ENCODE measurements at regions of chr7 and their contacts with region 1.

Region 1: DNA sequence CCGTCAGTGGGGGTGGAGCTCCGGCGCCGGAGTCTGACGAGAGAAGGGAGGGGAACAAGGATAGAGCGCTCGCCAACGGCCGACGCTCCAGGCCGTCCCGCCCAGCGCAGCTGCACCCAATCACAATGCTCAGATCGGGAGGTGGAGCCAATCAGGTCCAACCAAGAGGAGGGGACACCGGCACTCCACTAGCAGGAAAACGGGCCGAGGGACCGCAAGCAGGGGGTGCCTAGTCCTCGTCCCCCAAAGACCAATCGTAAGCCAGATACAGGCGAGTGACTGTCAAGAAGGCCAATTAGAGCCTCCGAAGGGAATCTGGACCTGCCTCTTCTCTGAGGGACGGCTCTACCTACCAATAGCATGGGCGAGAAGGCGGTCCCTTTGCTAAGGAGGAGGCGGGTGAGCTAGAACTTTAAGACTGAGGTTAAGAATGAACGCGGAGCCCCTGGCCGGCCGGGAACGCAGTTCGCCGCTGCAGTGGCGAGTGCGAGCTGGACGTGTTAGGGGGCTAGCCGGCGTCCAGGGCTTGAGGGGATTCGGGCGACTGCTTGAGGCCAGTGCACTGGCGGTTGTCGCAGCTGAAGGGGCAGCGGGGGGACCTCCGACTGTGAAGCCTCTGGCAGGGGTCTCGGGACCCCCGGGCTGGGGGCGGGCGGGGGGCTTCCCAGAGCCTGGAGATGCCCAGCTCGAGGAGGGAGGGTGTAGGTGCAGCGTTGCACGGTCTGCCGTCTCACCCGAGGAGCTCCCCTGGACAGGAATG is at the start of gene FBXO24:
- DNase-seq: peak; percentile 100
- H3K4me3 Mint-ChIP-seq: peak within 1 kb of the TSS; percentile 91
- H3K27ac Mint-ChIP-seq: peak within 1 kb of the TSS; percentile 96
- H3K4me1 Mint-ChIP-seq: peaks cover 30% of the 10 kb centered on the region
- H3K27me3 Mint-ChIP-seq: peaks cover 6% of the 10 kb centered on the region
- total RNA-seq, gene FBXO24: 0.38 and 0.42 TPM in 2 replicates

Region 2: GRCh38 chr7:100126931-100127865 is 459.2 kb before region 1 on chr7 and contains the start of gene MBLAC1:
- intact Hi-C with region 1: loop called (anchors 10 kb)
- DNase-seq: peak; percentile 97
- H3K4me3 Mint-ChIP-seq: peak within 1 kb of the TSS; percentile 99
- H3K27ac Mint-ChIP-seq: peak within 1 kb of the TSS; percentile 100
- H3K4me1 Mint-ChIP-seq: peaks cover 22% of the 10 kb centered on the region
- H3K27me3 Mint-ChIP-seq: no peaks in the 10 kb centered on the region
- total RNA-seq, gene MBLAC1: 3.0 and 3.5 TPM in 2 replicates

Region 3: GRCh38 chr7:100538654-100539435 is 47.6 kb before region 1 on chr7 and contains the start of gene AGFG2:
- intact Hi-C with region 1: loop called (anchors 1 kb)
- DNase-seq: peak; percentile 100
- H3K4me3 Mint-ChIP-seq: peak within 1 kb of the TSS; percentile 99
- H3K27ac Mint-ChIP-seq: peak within 1 kb of the TSS; percentile 99
- H3K4me1 Mint-ChIP-seq: peaks cover 46% of the 10 kb centered on the region
- H3K27me3 Mint-ChIP-seq: no peaks in the 10 kb centered on the region
- total RNA-seq, gene AGFG2: 112 and 114 TPM in 2 replicates

Region 4: GRCh38 chr7:100604976-100605911 is 18.8 kb after region 1 on chr7:
- intact Hi-C with region 1: loop called (anchors 1 kb)
- DNase-seq: peak; percentile 88
- H3K4me3 Mint-ChIP-seq: peak overlapping the region; percentile 88
- H3K27ac Mint-ChIP-seq: peak overlapping the region; percentile 22
- H3K4me1 Mint-ChIP-seq: peaks cover 23% of the 10 kb centered on the region
- H3K27me3 Mint-ChIP-seq: peaks cover 13% of the 10 kb centered on the region

Region 5: DNA sequence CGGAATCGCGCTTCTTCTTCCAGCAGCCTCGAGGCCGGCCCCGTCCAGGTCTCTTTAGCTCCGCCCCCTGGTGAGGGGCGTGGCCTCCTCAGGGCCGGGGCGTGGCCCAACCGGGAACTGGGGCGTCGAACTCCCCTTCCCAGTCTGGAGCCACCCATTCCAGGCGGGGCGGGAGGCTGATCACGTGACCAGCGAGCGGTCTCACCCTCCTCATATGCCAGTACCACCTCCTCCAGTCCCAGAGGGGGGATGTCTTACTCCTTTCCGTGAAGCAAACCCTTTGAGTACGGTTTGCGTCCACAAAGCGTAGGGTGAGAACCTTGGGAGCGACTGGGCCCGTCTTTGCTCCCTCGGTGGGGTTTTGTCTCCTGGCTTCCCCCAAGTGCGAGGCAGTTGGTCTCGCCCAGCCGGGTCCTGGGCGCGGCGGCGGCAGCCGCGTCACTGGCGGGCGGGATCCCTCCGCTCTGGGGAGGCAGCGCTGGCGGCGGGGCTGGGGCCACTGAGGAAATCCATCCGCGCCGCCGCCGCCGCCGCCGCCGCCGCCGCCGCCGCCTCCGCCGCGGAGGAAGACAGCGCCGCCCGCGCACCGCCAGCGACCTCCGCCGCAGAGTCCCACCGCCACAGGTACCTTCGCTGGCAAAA is 87.0 kb after region 1 on chr7 and contains the start of gene GNB2:
- intact Hi-C with region 1: loop called (anchors 1 kb)
- DNase-seq: peak; percentile 100
- H3K4me3 Mint-ChIP-seq: peak within 1 kb of the TSS; percentile 96
- H3K27ac Mint-ChIP-seq: peak within 1 kb of the TSS; percentile 94
- H3K4me1 Mint-ChIP-seq: peaks cover 12% of the 10 kb centered on the region
- H3K27me3 Mint-ChIP-seq: peaks cover 14% of the 10 kb centered on the region
- total RNA-seq, gene GNB2: 205 and 211 TPM in 2 replicates

Region 6: DNA sequence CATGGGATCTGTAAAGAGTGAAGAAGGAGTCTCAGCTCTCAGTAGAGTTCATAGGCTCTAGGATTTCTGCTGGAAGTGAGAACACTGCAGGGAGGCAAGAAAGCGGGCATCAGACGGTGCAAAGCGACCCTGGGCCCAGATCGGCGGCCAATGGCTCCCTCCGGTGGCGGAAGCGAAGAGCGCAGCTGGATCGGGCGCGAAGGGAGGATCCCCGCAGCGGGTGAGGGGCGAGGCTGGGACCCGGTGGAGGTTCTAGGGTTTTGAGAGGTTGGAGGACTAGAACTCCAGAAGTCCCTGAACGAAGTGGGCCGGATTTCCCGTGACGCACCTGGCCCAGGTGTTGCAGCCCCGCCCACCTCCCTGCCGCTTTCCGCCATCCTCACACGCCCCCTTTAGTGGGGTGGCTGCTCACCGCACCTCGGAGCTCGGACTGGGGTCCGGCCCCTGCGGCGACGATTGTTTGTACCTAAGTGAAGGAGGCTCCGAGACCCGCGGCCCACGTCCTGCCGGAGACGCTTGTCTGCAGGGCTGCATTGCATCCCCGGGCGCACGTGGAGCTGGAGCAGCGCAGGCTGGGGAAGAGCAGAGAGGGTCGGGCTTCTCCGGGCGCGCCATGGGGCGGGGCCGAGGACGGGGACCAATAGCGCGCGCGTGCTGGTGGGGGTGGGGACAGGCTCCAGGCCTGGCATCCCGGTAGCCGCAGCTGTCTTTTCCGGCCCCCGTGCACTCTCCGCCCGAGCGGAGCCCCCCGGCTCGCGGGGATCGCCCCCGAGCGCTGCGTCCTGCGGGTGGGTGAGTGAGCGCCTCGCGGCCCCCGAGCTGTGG is 265.8 kb after region 1 on chr7 and contains the start of gene SLC12A9:
- intact Hi-C with region 1: loop called (anchors 5 kb)
- DNase-seq: peak; percentile 97
- H3K4me3 Mint-ChIP-seq: peak within 1 kb of the TSS; percentile 95
- H3K27ac Mint-ChIP-seq: peak within 1 kb of the TSS; percentile 82
- H3K4me1 Mint-ChIP-seq: peaks cover 12% of the 10 kb centered on the region
- H3K27me3 Mint-ChIP-seq: no peaks in the 10 kb centered on the region
- total RNA-seq, gene SLC12A9: 37.3 and 41.2 TPM in 2 replicates

Measured in activated CD4-positive, alpha-beta T cell treated with anti-CD3 and anti-CD28 coated beads, Interleukin-2, amount 10 ng/mL, durations not matched to agents 24 days and 14 days (primary cell).